ENCODE measurements at regions of chr12 and their contacts with region 1.

Region 1: DNA sequence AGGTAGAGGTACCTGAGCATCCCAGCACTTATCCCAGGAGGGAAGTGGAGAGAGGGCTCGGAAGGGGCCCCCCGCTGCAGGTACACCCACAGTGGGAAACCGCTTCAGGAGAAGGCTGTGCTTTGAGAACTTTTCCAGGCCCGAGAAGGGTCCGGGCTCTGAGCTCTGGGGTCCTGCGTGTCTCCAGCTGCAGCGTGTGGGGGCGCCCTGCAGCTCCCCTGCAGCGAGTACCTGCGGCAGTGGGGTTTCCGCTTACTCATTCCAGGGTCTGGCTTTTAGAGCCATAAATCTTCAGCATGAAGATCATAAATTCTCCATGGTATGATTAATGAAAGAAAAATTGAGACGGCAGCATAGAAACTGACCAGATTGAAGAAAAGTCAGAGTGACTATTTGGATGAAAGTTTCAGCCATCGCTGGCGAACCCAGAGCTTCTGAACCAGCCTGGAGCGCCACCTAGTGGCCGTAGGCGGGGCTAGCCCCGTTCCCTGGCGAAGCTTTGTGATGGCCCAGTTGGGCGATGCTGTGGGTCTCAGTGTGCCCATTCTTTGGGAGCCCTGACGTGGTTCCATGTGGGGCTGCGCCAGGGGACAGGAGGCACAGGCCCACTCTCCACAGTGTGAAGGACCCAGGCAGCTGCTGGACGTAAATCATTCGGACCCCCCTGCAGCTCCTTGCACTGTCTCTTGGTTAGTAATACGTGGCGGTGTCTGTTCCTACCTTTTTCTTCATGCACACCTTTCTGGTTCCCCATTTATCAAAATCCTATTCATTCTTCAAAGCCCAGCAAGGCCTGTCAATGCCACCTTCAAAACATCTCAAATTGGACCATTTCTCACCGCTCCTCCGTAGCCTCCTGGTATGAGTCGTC is 198.2 kb downstream of the TSPAN9 start:
- ATAC-seq: peak; percentile 75 to 91 (median 80)
- H3K4me3 ChIP-seq: no peak overlapping the region
- H3K27ac ChIP-seq: no peak overlapping the region
- H3K4me1 ChIP-seq: peaks cover 0 to 10% of the 10 kb centered on the region in 2 donors

Region 2: DNA sequence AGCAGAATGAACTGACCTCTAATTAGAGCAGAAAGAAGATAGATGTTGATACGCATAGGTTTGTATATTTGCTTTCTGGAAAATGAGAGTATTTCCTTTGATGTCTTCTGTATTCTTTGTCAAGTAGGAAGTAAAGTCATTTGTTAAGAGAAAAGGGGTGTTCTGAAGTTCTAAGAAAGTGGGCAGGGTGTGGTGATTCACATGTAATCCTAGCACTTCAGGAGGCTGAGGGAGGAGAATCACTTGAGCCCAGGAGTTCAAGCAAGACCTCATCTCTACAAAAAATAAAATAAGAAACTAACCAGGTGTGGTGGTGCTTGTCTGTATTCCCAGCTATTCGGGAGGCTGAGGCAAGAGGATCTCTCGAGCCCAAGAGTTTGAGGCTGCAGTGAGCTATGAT is 395.6 kb before region 1 on chr12:
- in situ Hi-C with region 1: no loop called
- ATAC-seq: no peak
- H3K4me3 ChIP-seq: no peak overlapping the region
- H3K27ac ChIP-seq: no peak overlapping the region
- H3K4me1 ChIP-seq: peaks cover 10% of the 10 kb centered on the region in 2 donors

Region 3: GRCh38 chr12:3073438-3074250 is 201.8 kb before region 1 on chr12:
- in situ Hi-C with region 1: loop called in 1 of 9 experiments (anchors 10 kb)
- ATAC-seq: peak; percentile 15 to 41 (median 29)
- H3K4me3 ChIP-seq: no peak overlapping the region
- H3K27ac ChIP-seq: no peak overlapping the region
- H3K4me1 ChIP-seq: peaks cover 9% of the 10 kb centered on the region in 2 donors

Region 4: DNA sequence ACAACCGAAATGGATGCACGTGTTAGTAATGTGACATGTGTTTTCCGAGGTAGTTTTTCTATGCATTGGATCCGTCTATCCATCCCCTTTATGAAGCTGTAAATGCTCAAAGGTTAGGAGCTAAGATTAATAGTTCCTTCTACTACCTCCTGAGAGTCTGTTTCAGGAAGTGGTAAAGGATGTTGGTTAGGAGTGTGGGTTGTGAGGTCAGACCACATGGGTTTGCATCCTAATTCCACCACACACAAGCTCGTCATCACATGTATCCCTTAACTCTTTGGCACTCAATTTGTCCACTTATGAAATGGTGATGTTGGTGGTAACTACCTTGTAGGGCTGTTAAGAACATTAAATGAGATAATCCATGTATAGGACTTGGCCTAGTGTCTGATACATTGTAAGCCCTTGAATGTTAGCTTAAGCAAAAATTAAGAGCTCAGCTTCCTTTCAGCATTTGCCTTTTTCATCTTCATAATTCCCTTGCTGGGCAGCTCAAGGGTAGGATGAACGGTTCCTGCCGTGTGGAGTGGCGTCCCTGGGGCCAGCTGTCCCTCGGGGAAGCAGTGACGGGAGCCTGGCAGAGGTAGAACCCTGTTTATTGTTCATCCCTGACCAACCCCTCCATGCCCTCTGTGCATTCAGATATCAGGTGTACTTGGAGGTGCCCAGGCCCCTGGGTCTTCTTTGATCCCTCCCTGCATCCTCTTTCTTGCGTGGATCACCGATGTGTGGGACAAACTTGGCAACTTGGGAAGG is 145.9 kb before region 1 on chr12:
- in situ Hi-C with region 1: loop called in 8 of 9 experiments (anchors 5 to 25 kb)
- ATAC-seq: no peak
- H3K4me3 ChIP-seq: no peak overlapping the region
- H3K27ac ChIP-seq: no peak overlapping the region
- H3K4me1 ChIP-seq: no peaks in the 10 kb centered on the region

Region 5: DNA sequence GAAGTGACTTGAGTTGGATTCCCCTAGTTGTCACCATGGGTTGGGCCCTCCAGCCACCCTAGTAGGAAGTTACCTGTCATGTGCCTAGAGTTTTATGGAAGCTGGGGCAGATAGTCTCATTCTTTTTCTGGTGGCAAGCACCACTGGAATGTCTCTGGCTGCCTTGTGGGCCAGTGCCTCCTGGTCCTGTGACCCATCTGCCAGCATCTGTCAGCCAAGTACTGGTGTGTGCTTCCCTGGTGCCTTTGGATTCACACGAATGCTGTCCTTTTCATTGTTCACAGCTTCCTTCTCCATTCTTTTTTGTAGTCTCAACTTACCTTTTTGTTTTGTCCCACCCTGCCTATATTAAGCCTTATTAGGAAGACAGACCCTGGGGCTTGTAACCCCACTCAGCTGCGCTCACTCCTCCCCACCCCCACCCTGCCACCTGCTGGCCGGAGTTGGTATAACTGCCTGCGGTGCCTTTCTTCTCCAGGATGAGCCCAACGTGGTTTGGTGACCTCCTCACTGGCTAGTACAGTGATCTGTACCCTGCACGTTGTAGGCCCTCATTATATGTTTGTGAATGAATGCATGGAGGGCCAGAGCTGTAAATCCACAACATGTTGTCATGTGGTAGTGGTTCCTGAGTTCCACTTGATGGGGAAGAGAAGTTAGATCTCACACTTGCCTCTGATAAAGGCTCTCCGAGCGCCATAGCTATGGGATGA is 72.5 kb before region 1 on chr12:
- in situ Hi-C with region 1: loop called in 1 of 9 experiments (anchors 10 kb)
- ATAC-seq: no peak
- H3K4me3 ChIP-seq: no peak overlapping the region
- H3K27ac ChIP-seq: no peak overlapping the region
- H3K4me1 ChIP-seq: peaks cover 46 to 55% of the 10 kb centered on the region in 2 donors

Measured in motor neuron (in vitro differentiated cells).